ENCODE measurements at regions of chr22 and their contacts with region 1.

Region 1: DNA sequence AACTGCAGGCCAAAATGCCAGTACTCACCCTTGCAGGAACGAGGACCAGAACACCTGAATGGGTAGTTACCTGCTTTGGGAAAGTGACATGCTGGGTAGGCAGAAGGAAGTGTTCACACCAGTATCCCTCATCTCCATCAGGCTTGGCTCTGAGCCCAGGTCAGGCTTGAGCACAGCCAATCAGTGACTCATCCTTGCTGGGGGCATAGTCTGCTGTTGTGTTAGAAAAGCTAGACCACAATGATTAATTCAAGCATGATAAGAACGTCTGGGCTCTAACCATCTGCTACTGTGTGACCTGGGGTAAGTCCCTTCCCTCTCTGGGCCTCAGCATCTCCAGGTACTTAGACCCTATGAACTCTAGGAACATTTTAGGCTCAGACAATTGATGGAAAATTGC is 450.4 kb downstream of the MIAT start:
- DNase-seq: peak in 2 of 9 experiments; percentile 19 to 27
- ATAC-seq: no peak
- H3K4me3 ChIP-seq: no peak overlapping the region
- H3K4me3 Mint-ChIP-seq: no peak overlapping the region
- H3K27ac ChIP-seq: no peak overlapping the region
- H3K27ac Mint-ChIP-seq: no peak overlapping the region
- H3K4me1 ChIP-seq: no peaks in the 10 kb centered on the region
- H3K4me1 Mint-ChIP-seq: no peaks in the 10 kb centered on the region
- H3K27me3 ChIP-seq: no peaks in the 10 kb centered on the region
- H3K27me3 Mint-ChIP-seq: peaks cover 16% of the 10 kb centered on the region
- CTCF ChIP-seq: no peak

Region 2: GRCh38 chr22:27139935-27140511 is 32.2 kb after region 1 on chr22:
- CTCF ChIA-PET with region 1: no interaction called
- POLR2A ChIA-PET with region 1: no interaction called
- intact Hi-C with region 1: no loop called
- DNase-seq: no peak
- ATAC-seq: no peak
- H3K4me3 ChIP-seq: no peak overlapping the region
- H3K4me3 Mint-ChIP-seq: no peak overlapping the region
- H3K27ac ChIP-seq: no peak overlapping the region
- H3K27ac Mint-ChIP-seq: no peak overlapping the region
- H3K4me1 ChIP-seq: no peaks in the 10 kb centered on the region
- H3K4me1 Mint-ChIP-seq: no peaks in the 10 kb centered on the region
- H3K27me3 ChIP-seq: no peaks in the 10 kb centered on the region
- H3K27me3 Mint-ChIP-seq: peaks cover 8% of the 10 kb centered on the region
- CTCF ChIP-seq: no peak

Region 3: GRCh38 chr22:27348634-27349033 is 240.8 kb after region 1 on chr22:
- CTCF ChIA-PET with region 1: no interaction called
- POLR2A ChIA-PET with region 1: no interaction called
- intact Hi-C with region 1: loop called in 1 of 2 experiments (anchors 5 kb)
- DNase-seq: no peak
- ATAC-seq: no peak
- H3K4me3 ChIP-seq: no peak overlapping the region
- H3K4me3 Mint-ChIP-seq: no peak overlapping the region
- H3K27ac ChIP-seq: no peak overlapping the region
- H3K27ac Mint-ChIP-seq: no peak overlapping the region
- H3K4me1 ChIP-seq: no peaks in the 10 kb centered on the region
- H3K4me1 Mint-ChIP-seq: no peaks in the 10 kb centered on the region
- H3K27me3 ChIP-seq: no peaks in the 10 kb centered on the region
- H3K27me3 Mint-ChIP-seq: peaks cover 22% of the 10 kb centered on the region
- CTCF ChIP-seq: no peak